ENCODE measurements at regions of chr2 and their contacts with region 1.

Region 1: DNA sequence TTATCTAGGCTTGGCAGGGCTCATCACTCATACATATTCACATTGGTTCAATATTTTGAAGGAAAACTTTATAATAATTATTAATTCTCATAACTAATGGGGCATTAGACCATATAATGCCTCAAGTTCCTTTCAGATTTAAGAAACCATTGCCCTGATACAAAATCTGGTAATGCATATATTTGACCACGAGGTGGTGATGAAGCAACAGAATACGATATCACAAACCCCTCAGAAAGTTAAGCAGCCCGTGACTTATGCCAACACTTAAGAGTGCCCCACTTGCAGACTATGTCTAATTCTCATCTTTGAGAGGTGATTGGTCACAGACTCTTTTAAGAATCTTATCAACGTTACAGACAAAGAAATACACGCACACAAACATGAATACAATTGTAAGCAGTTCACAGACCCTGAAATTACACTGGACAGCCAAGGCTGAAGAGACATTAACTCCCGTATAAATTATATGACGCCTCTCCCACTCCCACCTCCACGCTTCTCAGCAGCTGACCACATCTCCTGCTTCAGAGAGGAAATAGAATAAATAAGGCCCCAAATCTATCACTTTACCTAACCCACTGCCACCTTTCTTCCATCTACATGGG is 20.7 kb upstream of the DNAH6 start:
- DNase-seq: peak in 1 of 2 experiments; percentile 54
- H3K4me3 ChIP-seq: no peak overlapping the region
- H3K4me3 Mint-ChIP-seq: no peak overlapping the region
- H3K27ac Mint-ChIP-seq: no peak overlapping the region
- H3K4me1 ChIP-seq: no peaks in the 10 kb centered on the region
- H3K4me1 Mint-ChIP-seq: peaks cover 5% of the 10 kb centered on the region
- H3K27me3 ChIP-seq: no peaks in the 10 kb centered on the region
- H3K27me3 Mint-ChIP-seq: no peaks in the 10 kb centered on the region
- CTCF ChIP-seq: peak; percentile 54 to 73

Region 2: DNA sequence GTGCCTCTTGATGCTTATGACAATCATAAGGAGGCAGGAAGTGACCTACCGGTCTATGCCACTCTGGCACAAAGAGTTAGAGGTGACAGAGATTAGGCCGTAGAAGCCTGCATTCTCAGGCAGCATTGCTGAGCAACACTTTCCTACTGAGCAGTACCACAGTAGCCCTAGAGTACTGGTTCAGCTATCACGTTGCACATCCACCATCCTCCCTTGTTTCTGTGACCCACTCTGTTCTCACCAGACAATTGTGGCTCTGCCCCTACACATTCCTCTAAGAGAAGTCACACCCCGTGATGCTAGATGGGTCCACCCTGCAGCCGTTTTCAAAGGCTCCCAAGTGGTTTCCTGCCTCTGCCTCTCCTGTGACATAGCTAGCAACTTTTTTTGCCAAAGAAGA is 13.9 kb before region 1 on chr2:
- CTCF ChIA-PET with region 1: no interaction called
- POLR2A ChIA-PET with region 1: no interaction called
- intact Hi-C with region 1: no loop called
- DNase-seq: no peak
- H3K4me3 ChIP-seq: no peak overlapping the region
- H3K4me3 Mint-ChIP-seq: no peak overlapping the region
- H3K27ac Mint-ChIP-seq: peak overlapping the region; percentile 13
- H3K4me1 ChIP-seq: peaks cover 13% of the 10 kb centered on the region
- H3K4me1 Mint-ChIP-seq: peaks cover 9% of the 10 kb centered on the region
- H3K27me3 ChIP-seq: no peaks in the 10 kb centered on the region
- H3K27me3 Mint-ChIP-seq: no peaks in the 10 kb centered on the region
- CTCF ChIP-seq: no peak

Region 3: DNA sequence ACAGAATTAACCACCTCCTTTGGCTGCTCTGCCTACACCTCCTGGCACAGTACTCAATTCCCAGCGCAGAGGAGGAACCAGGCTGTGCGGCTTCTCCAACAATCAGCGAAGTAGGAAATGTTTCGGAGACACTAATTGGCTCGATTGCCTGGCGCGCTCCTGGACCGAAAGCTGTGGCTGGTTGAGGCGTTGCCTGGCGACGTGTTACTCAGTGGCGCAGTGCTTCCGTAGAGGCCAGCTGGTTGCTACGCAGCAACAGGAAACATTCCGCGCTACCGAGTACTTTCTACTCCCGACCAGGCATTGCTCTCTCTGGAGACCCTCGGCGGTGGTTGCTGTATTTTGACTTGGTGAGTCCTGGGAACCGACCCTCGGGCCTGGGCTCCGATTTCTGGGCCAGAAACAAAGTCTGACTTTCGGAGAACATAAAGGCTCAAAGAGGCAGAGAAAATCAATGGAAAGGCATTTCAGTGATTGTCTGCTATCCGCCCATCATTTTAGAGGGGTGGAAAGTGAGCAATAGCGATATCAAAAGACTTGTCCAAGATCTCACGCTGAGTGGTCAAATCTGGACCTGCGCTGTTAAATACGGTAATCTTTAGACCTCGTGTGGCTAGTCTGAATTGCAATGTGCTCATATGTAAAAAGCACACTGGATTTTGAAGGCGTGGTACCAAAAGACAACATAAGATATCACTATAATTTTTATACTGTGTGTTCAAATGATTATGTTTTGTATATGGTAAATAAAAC is 20.8 kb after region 1 on chr2 and contains the start of gene DNAH6:
- CTCF ChIA-PET with region 1: no interaction called
- POLR2A ChIA-PET with region 1: no interaction called
- intact Hi-C with region 1: no loop called
- DNase-seq: peak; percentile 88 to 91
- H3K4me3 ChIP-seq: peak within 1 kb of the TSS; percentile 28
- H3K4me3 Mint-ChIP-seq: peak within 1 kb of the TSS; percentile 76
- H3K27ac Mint-ChIP-seq: peak within 1 kb of the TSS; percentile 90
- H3K4me1 ChIP-seq: no peaks in the 10 kb centered on the region
- H3K4me1 Mint-ChIP-seq: peaks cover 7% of the 10 kb centered on the region
- H3K27me3 ChIP-seq: no peaks in the 10 kb centered on the region
- H3K27me3 Mint-ChIP-seq: no peaks in the 10 kb centered on the region
- CTCF ChIP-seq: no peak
- total RNA-seq, gene DNAH6: 0.32 and 0.70 TPM in 2 replicates

Region 4: GRCh38 chr2:84865181-84865783 is 369.6 kb after region 1 on chr2:
- CTCF ChIA-PET with region 1: no interaction called
- POLR2A ChIA-PET with region 1: no interaction called
- intact Hi-C with region 1: loop called (anchors 5 kb)
- DNase-seq: no peak
- H3K4me3 ChIP-seq: no peak overlapping the region
- H3K4me3 Mint-ChIP-seq: no peak overlapping the region
- H3K27ac Mint-ChIP-seq: no peak overlapping the region
- H3K4me1 ChIP-seq: no peaks in the 10 kb centered on the region
- H3K4me1 Mint-ChIP-seq: no peaks in the 10 kb centered on the region
- H3K27me3 ChIP-seq: no peaks in the 10 kb centered on the region; the same call in 1 of the 2 replicates
- H3K27me3 Mint-ChIP-seq: no peaks in the 10 kb centered on the region
- CTCF ChIP-seq: peak in 1 of 2 experiments; percentile 15